CD8-positive, alpha-beta memory T cell (primary cell): ENCODE measurements at regions of chr6 and their contacts with region 1.

Region 1: DNA sequence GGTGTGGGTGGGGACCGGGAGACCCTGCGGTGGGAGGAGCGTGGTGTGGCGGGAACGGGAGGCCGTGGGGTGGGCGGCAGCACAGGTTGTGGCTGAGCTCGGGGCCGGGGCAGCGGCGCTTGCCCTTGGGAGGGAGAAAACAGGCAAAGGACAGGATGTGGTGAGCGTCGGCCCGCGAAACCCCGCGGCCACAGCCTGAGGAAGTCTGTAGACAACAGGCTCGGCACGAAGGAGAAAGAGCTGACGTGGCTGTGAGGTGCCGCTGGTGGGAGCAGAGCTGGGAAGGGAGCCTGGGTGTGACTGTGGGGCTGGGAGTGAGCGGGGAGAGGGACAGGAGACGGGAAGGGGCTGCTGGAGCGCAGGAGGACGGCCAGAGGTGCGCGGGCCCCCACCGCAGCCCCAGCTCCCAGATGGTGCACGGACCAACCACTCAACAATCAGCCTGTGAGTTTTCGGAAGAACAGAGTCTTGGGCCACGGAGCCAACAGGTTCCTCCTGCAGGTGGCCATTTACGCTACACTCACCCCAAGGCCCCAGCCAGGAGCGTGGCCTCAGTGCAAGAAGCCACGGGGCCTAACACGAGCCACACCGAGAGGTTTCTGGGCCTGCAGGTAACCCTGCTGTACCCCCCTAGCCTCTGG is 202.8 kb downstream of the DLL1 start:
- DNase-seq: peak; percentile 41 to 83 (median 50)
- H3K4me3 ChIP-seq: peak overlapping the region; percentile 71
- H3K4me3 Mint-ChIP-seq: peak overlapping the region; percentile 82 to 95 (median 87)
- H3K27ac ChIP-seq: no peak overlapping the region
- H3K27ac Mint-ChIP-seq: peak overlapping the region; percentile 68 to 98 (median 95)
- H3K4me1 ChIP-seq: peaks cover 23% of the 10 kb centered on the region
- H3K4me1 Mint-ChIP-seq: peaks cover 35 to 48% (median 40%) of the 10 kb centered on the region in 3 donors
- H3K27me3 ChIP-seq: no peaks in the 10 kb centered on the region
- H3K27me3 Mint-ChIP-seq: peaks cover 0 to 3% of the 10 kb centered on the region in 2 donors

Region 2: GRCh38 chr6:170129691-170130171 is 41.7 kb after region 1 on chr6:
- CTCF ChIA-PET with region 1: no interaction called
- POLR2A ChIA-PET with region 1: no interaction called
- DNase-seq: peak in 1 of 5 donors; percentile 46
- H3K4me3 ChIP-seq: no peak overlapping the region
- H3K4me3 Mint-ChIP-seq: no peak overlapping the region
- H3K27ac ChIP-seq: no peak overlapping the region
- H3K27ac Mint-ChIP-seq: no peak overlapping the region
- H3K4me1 ChIP-seq: no peaks in the 10 kb centered on the region
- H3K4me1 Mint-ChIP-seq: no peaks in the 10 kb centered on the region
- H3K27me3 ChIP-seq: no peaks in the 10 kb centered on the region
- H3K27me3 Mint-ChIP-seq: peaks cover 4 to 12% of the 10 kb centered on the region in 2 donors

Region 3: DNA sequence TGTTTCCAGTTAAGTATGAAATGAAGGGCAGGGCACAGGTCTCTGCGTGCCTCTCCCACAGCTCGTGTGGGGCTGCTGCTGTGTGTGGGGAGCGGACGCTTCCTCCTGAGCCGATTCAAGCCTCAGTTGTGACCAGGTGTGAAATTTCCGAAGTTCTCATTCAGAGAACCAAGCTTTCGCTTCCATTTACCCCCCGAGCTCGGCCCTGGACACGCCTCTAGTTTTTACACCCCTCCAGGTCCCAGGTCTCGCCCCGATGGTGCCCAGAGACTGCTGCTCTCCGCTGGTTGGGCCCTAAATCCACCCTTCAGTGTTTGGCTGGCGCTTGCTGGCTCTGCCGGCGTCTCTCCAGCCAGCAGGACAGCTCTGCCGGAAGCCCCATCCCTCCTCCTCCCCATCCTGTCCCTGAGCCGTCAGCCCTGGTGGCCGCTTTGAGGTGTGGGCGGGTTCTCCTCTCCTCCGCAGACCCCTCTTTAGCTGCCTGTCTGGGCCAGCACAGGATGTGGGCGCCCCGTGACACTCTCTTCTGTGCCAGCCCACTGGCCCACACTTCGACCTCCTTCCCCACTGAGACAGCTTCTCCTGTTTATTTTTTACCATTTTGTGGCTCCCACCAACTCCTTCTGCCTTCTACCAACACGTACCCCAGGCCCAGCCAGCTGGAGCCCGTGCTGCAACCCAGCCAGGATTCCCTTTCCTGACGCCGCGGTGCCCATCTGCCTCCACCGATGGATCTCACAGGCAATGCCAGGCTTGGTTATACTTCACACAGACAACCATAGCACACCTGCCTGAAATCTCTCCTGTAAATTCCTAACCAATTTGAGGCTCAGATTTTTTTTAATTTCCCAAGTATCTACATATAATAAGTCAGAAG is 60.0 kb after region 1 on chr6:
- CTCF ChIA-PET with region 1: interaction called, 6 read pairs
- POLR2A ChIA-PET with region 1: interaction called, 40 read pairs
- DNase-seq: peak; percentile 56 to 82 (median 62)
- H3K4me3 ChIP-seq: peak overlapping the region; percentile 36
- H3K4me3 Mint-ChIP-seq: peak overlapping the region; percentile 79 to 94 (median 86)
- H3K27ac ChIP-seq: peak overlapping the region; percentile 45
- H3K27ac Mint-ChIP-seq: peak overlapping the region; percentile 88 to 98 (median 94)
- H3K4me1 ChIP-seq: peaks cover 51% of the 10 kb centered on the region
- H3K4me1 Mint-ChIP-seq: peaks cover 53 to 70% (median 53%) of the 10 kb centered on the region in 3 donors
- H3K27me3 ChIP-seq: no peaks in the 10 kb centered on the region
- H3K27me3 Mint-ChIP-seq: peaks cover 0 to 8% of the 10 kb centered on the region in 2 donors